ENCODE measurements at regions of chr18 and their contacts with region 1.

Region 1: GRCh38 chr18:1663879-1664705 is 759.4 kb downstream of the ADCYAP1 start:
- DNase-seq: peak; percentile 70
- H3K4me3 Mint-ChIP-seq: no peak overlapping the region
- H3K27ac Mint-ChIP-seq: no peak overlapping the region
- H3K4me1 Mint-ChIP-seq: peaks cover 6% of the 10 kb centered on the region
- H3K27me3 Mint-ChIP-seq: no peaks in the 10 kb centered on the region
- CTCF ChIP-seq: peak; percentile 64

Region 2: DNA sequence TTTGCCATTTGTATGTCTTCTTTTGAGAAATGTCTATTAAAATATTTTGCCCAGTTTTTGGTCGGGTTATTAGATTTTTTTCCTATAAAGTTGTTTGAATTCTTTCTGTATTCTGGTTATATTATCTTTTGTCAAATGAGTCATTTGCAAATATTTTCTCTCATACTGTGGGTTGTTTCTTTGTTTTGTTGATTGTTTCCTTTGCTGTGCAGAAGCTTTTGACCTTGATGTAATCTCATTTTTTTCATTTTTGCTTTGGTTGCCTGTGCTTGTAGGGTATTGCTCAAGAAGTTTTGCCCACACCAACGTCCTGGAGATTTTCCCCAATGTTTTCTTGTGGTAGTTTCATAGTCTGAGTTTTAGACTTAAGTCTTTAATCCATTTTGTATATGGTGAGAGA is 513.7 kb before region 1 on chr18:
- CTCF ChIA-PET with region 1: no interaction called
- POLR2A ChIA-PET with region 1: no interaction called
- intact Hi-C with region 1: no loop called
- DNase-seq: no peak
- H3K4me3 Mint-ChIP-seq: no peak overlapping the region
- H3K27ac Mint-ChIP-seq: no peak overlapping the region
- H3K4me1 Mint-ChIP-seq: no peaks in the 10 kb centered on the region
- H3K27me3 Mint-ChIP-seq: no peaks in the 10 kb centered on the region
- CTCF ChIP-seq: no peak

Region 3: DNA sequence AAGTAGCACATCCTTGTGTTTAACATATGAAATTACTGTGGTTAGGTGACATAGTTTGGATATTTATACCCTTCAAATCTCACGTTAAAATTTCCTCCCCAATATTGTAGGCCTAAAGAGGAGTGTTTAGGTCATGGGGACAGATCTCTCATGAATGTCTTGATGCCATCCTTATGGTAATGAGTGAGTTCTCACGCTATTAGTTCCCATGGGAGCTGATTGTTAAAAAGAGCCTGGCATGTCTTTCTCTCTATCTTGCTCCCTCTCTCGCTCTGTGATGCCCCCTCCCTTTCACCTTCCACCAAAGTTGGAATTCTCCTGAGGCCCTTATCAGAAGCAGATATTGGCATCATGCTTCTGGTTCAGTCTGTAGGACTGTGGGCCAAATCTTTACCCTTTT is 99.3 kb before region 1 on chr18:
- CTCF ChIA-PET with region 1: no interaction called
- POLR2A ChIA-PET with region 1: no interaction called
- intact Hi-C with region 1: no loop called
- DNase-seq: no peak
- H3K4me3 Mint-ChIP-seq: no peak overlapping the region
- H3K27ac Mint-ChIP-seq: no peak overlapping the region
- H3K4me1 Mint-ChIP-seq: no peaks in the 10 kb centered on the region
- H3K27me3 Mint-ChIP-seq: no peaks in the 10 kb centered on the region
- CTCF ChIP-seq: no peak

Region 4: GRCh38 chr18:1585879-1586488 is 78.1 kb before region 1 on chr18:
- CTCF ChIA-PET with region 1: interaction called, 13 read pairs
- POLR2A ChIA-PET with region 1: no interaction called
- intact Hi-C with region 1: no loop called
- DNase-seq: peak; percentile 45
- H3K4me3 Mint-ChIP-seq: no peak overlapping the region
- H3K27ac Mint-ChIP-seq: no peak overlapping the region
- H3K4me1 Mint-ChIP-seq: peaks cover 5% of the 10 kb centered on the region
- H3K27me3 Mint-ChIP-seq: no peaks in the 10 kb centered on the region
- CTCF ChIP-seq: peak; percentile 39

Region 5: DNA sequence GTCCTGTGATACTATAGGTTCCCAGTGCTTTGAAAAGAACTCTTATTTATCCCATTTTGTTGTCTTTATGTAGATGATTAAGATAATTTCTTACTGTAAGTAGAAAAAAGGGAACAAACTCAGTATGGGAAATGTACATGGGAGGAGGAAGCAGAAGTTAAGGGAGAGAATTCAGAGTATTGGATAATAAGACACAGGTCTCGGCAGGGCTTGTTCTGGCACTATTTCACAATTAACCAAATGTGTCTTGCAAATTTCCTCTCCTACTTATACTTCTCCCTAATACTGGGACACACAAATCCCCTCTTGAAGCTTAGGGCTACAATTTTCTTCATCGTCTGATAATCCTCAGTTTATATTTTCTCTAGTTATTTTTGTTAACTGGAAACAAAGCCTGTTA is 15.4 kb before region 1 on chr18:
- CTCF ChIA-PET with region 1: interaction called, 14 read pairs
- POLR2A ChIA-PET with region 1: no interaction called
- intact Hi-C with region 1: no loop called
- DNase-seq: no peak
- H3K4me3 Mint-ChIP-seq: no peak overlapping the region
- H3K27ac Mint-ChIP-seq: no peak overlapping the region
- H3K4me1 Mint-ChIP-seq: no peaks in the 10 kb centered on the region
- H3K27me3 Mint-ChIP-seq: no peaks in the 10 kb centered on the region
- CTCF ChIP-seq: no peak

Region 6: GRCh38 chr18:1676387-1676786 is 12.3 kb after region 1 on chr18:
- CTCF ChIA-PET with region 1: interaction called, 29 read pairs
- POLR2A ChIA-PET with region 1: no interaction called
- intact Hi-C with region 1: no loop called
- DNase-seq: no peak
- H3K4me3 Mint-ChIP-seq: no peak overlapping the region
- H3K27ac Mint-ChIP-seq: no peak overlapping the region
- H3K4me1 Mint-ChIP-seq: no peaks in the 10 kb centered on the region
- H3K27me3 Mint-ChIP-seq: no peaks in the 10 kb centered on the region
- CTCF ChIP-seq: no peak

Region 7: GRCh38 chr18:2083691-2084090 is 419.6 kb after region 1 on chr18:
- CTCF ChIA-PET with region 1: interaction called, 13 read pairs
- POLR2A ChIA-PET with region 1: no interaction called
- intact Hi-C with region 1: loop called (anchors 1 kb)
- DNase-seq: peak; percentile 42
- H3K4me3 Mint-ChIP-seq: no peak overlapping the region
- H3K27ac Mint-ChIP-seq: no peak overlapping the region
- H3K4me1 Mint-ChIP-seq: peaks cover 8% of the 10 kb centered on the region
- H3K27me3 Mint-ChIP-seq: no peaks in the 10 kb centered on the region
- CTCF ChIP-seq: peak; percentile 54

Region 8: GRCh38 chr18:2547477-2548087 is 883.5 kb after region 1 on chr18:
- CTCF ChIA-PET with region 1: interaction called, 6 read pairs
- POLR2A ChIA-PET with region 1: no interaction called
- intact Hi-C with region 1: loop called (anchors 10 kb)
- DNase-seq: peak; percentile 55
- H3K4me3 Mint-ChIP-seq: no peak overlapping the region
- H3K27ac Mint-ChIP-seq: peak overlapping the region; percentile 23
- H3K4me1 Mint-ChIP-seq: no peaks in the 10 kb centered on the region
- H3K27me3 Mint-ChIP-seq: no peaks in the 10 kb centered on the region
- CTCF ChIP-seq: peak; percentile 58